GM12878 (cell line): ENCODE measurements at regions of chr1 and their contacts with region 1.

Region 1: DNA sequence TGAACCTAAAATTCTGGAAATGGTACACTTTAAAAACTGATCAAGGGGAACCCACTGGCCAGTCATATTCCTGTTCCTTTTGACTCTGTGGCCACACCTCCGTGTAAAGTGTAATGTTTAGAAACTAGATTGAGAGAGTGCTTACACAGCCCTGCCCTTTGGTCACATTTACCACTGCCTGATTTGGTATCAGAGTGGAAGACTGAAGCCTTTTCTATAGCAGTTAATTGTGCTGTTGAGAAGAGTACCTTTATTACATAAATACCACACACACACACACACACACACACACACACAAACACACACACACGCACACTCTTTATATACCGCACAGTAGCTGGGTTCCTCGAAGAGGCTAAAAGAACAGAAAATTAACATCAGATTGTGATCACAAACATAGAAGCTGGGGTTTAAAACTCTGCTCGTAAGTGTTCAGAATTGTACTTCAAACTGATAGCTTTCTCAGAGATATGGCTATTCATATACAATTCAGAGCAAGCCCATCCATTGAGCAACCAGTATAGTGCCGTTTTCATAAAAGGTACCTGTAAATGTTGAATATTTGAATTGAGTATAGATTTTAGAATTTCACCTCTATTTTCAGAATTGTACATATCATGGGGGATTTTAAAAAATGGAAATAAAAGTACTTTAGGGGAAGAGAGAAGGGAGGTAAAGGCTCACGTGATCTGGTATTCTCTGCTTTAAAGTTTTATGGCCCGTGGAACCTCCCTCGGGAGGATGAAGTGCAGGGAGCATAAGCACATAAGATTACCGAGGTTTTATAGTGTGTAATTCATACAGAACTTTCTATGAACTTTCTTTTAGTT is 37.5 kb downstream of the CAMTA1 start:
- DNase-seq: peak; percentile 53
- ATAC-seq: peak; percentile 95
- H3K4me3 ChIP-seq: no peak overlapping the region
- H3K27ac ChIP-seq: peak overlapping the region; percentile 30
- H3K4me1 ChIP-seq: peaks cover 21% of the 10 kb centered on the region
- H3K27me3 ChIP-seq: no peaks in the 10 kb centered on the region
- CTCF ChIP-seq: no peak
- EP300 ChIP-seq: peak in 1 of 2 experiments; percentile 40; a peak in 2 of 4 replicates
- POLR2A ChIP-seq: no peak
- RAD21 ChIP-seq: no peak

Region 2: GRCh38 chr1:6602669-6603237 is 220.0 kb before region 1 on chr1 and contains the start of gene KLHL21:
- CTCF ChIA-PET with region 1: no interaction called
- POLR2A ChIA-PET with region 1: no interaction called
- RAD21 ChIA-PET with region 1: no interaction called
- SMC1A ChIA-PET with region 1: no interaction called
- in situ Hi-C with region 1: no loop called
- intact Hi-C with region 1: no loop called
- DNase-seq: no peak
- ATAC-seq: peak; percentile 76
- H3K4me3 ChIP-seq: peak within 1 kb of the TSS; percentile 94
- H3K27ac ChIP-seq: peak within 1 kb of the TSS; percentile 79
- H3K4me1 ChIP-seq: peaks cover 13% of the 10 kb centered on the region
- H3K27me3 ChIP-seq: no peaks in the 10 kb centered on the region
- CTCF ChIP-seq: no peak
- EP300 ChIP-seq: no peak
- POLR2A ChIP-seq: peak; percentile 83
- RAD21 ChIP-seq: no peak
- polyA plus RNA-seq, gene KLHL21: 0.76 to 1.2 TPM

Region 3: GRCh38 chr1:6730880-6731279 is 91.9 kb before region 1 on chr1:
- CTCF ChIA-PET with region 1: no interaction called
- POLR2A ChIA-PET with region 1: no interaction called
- RAD21 ChIA-PET with region 1: no interaction called
- SMC1A ChIA-PET with region 1: no interaction called
- in situ Hi-C with region 1: no loop called
- intact Hi-C with region 1: no loop called
- DNase-seq: no peak
- ATAC-seq: no peak
- H3K4me3 ChIP-seq: no peak overlapping the region
- H3K27ac ChIP-seq: no peak overlapping the region
- H3K4me1 ChIP-seq: no peaks in the 10 kb centered on the region
- H3K27me3 ChIP-seq: no peaks in the 10 kb centered on the region
- CTCF ChIP-seq: no peak
- EP300 ChIP-seq: no peak
- POLR2A ChIP-seq: no peak
- RAD21 ChIP-seq: no peak

Region 4: GRCh38 chr1:6770751-6771440 is 51.8 kb before region 1 on chr1:
- CTCF ChIA-PET with region 1: no interaction called
- POLR2A ChIA-PET with region 1: no interaction called
- RAD21 ChIA-PET with region 1: no interaction called
- SMC1A ChIA-PET with region 1: no interaction called
- in situ Hi-C with region 1: no loop called
- intact Hi-C with region 1: no loop called
- DNase-seq: no peak
- ATAC-seq: peak; percentile 92
- H3K4me3 ChIP-seq: no peak overlapping the region
- H3K27ac ChIP-seq: no peak overlapping the region
- H3K4me1 ChIP-seq: peaks cover 7% of the 10 kb centered on the region; the same call in 1 of the 2 replicates
- H3K27me3 ChIP-seq: no peaks in the 10 kb centered on the region
- CTCF ChIP-seq: no peak
- EP300 ChIP-seq: no peak
- POLR2A ChIP-seq: no peak
- RAD21 ChIP-seq: no peak

Region 5: GRCh38 chr1:6784560-6785317 is 38.0 kb before region 1 on chr1:
- CTCF ChIA-PET with region 1: interaction called, 3 read pairs
- POLR2A ChIA-PET with region 1: interaction called, 5 read pairs
- RAD21 ChIA-PET with region 1: interaction called, 6 read pairs
- SMC1A ChIA-PET with region 1: interaction called, 9 read pairs
- in situ Hi-C with region 1: no loop called
- intact Hi-C with region 1: loop called (anchors 1 kb)
- DNase-seq: peak; percentile 99
- ATAC-seq: peak; percentile 92
- H3K4me3 ChIP-seq: peak overlapping the region; percentile 88
- H3K27ac ChIP-seq: peak overlapping the region; percentile 90
- H3K4me1 ChIP-seq: peaks cover 3% of the 10 kb centered on the region
- H3K27me3 ChIP-seq: no peaks in the 10 kb centered on the region
- CTCF ChIP-seq: no peak
- EP300 ChIP-seq: peak in 1 of 2 experiments; percentile 44; a peak in 3 of 4 replicates
- POLR2A ChIP-seq: peak; percentile 85
- RAD21 ChIP-seq: no peak

Region 6: GRCh38 chr1:6801966-6802365 is 20.8 kb before region 1 on chr1:
- CTCF ChIA-PET with region 1: interaction called, 15 read pairs
- POLR2A ChIA-PET with region 1: interaction called, 10 read pairs
- RAD21 ChIA-PET with region 1: interaction called, 5 read pairs
- SMC1A ChIA-PET with region 1: interaction called, 45 read pairs
- in situ Hi-C with region 1: no loop called
- intact Hi-C with region 1: no loop called
- DNase-seq: no peak
- ATAC-seq: no peak; the same call in 2 of the 3 replicates
- H3K4me3 ChIP-seq: no peak overlapping the region
- H3K27ac ChIP-seq: no peak overlapping the region
- H3K4me1 ChIP-seq: peaks cover 8% of the 10 kb centered on the region
- H3K27me3 ChIP-seq: no peaks in the 10 kb centered on the region
- CTCF ChIP-seq: no peak
- EP300 ChIP-seq: no peak
- POLR2A ChIP-seq: no peak
- RAD21 ChIP-seq: no peak

Region 7: GRCh38 chr1:6807782-6808181 is 15.0 kb before region 1 on chr1:
- CTCF ChIA-PET with region 1: interaction called, 15 read pairs
- POLR2A ChIA-PET with region 1: interaction called, 10 read pairs
- RAD21 ChIA-PET with region 1: interaction called, 5 read pairs
- SMC1A ChIA-PET with region 1: interaction called, 45 read pairs
- in situ Hi-C with region 1: no loop called
- intact Hi-C with region 1: no loop called
- DNase-seq: no peak
- ATAC-seq: no peak
- H3K4me3 ChIP-seq: no peak overlapping the region
- H3K27ac ChIP-seq: no peak overlapping the region
- H3K4me1 ChIP-seq: peaks cover 8% of the 10 kb centered on the region; the same call in 1 of the 2 replicates
- H3K27me3 ChIP-seq: no peaks in the 10 kb centered on the region
- CTCF ChIP-seq: no peak
- EP300 ChIP-seq: no peak
- POLR2A ChIP-seq: no peak
- RAD21 ChIP-seq: no peak